Lower leg skin (tissue), 4 donors: ENCODE measurements at regions of chr19 and their contacts with region 1.

Region 1: GRCh38 chr19:35134601-35135242 is at the start of gene LGI4:
- DNase-seq: peak in 1 of 2 donors; percentile 85
- H3K4me3 ChIP-seq: peak within 1 kb of the TSS; percentile 8
- CTCF ChIP-seq: no peak
- POLR2A ChIP-seq: no peak
- total RNA-seq, gene LGI4: 4.3 to 19.4 (median 8.9) TPM

Region 2: GRCh38 chr19:35066691-35067563 is 67.8 kb before region 1 on chr19:
- intact Hi-C with region 1: loop called (anchors 5 kb)
- DNase-seq: peak; percentile 76 to 97
- H3K4me3 ChIP-seq: no peak overlapping the region
- CTCF ChIP-seq: peak in 1 of 3 donors; percentile 79
- POLR2A ChIP-seq: no peak